Activated naive CD4-positive, alpha-beta T cell treated with anti-CD3 and anti-CD28 coated beads for 36 hours (primary cell): ENCODE measurements at regions of chrX and their contacts with region 1.

Region 1: GRCh38 chrX:118603981-118604380 is 108.4 kb downstream of the DOCK11 start:
- DNase-seq: peak; percentile 50
- H3K4me3 Mint-ChIP-seq: no peak overlapping the region
- H3K27ac Mint-ChIP-seq: peak overlapping the region; percentile 28
- H3K4me1 Mint-ChIP-seq: peaks cover 21% of the 10 kb centered on the region
- H3K27me3 Mint-ChIP-seq: no peaks in the 10 kb centered on the region

Region 2: GRCh38 chrX:118325453-118325852 is 278.5 kb before region 1 on chrX:
- CTCF ChIA-PET with region 1: no interaction called
- intact Hi-C with region 1: loop called (anchors 5 kb)
- DNase-seq: no peak
- H3K4me3 Mint-ChIP-seq: no peak overlapping the region
- H3K27ac Mint-ChIP-seq: no peak overlapping the region
- H3K4me1 Mint-ChIP-seq: no peaks in the 10 kb centered on the region
- H3K27me3 Mint-ChIP-seq: no peaks in the 10 kb centered on the region

Region 3: GRCh38 chrX:118459494-118459893 is 144.5 kb before region 1 on chrX:
- CTCF ChIA-PET with region 1: interaction called, 62 read pairs
- intact Hi-C with region 1: loop called (anchors 1 kb)
- DNase-seq: peak; percentile 37
- H3K4me3 Mint-ChIP-seq: no peak overlapping the region
- H3K27ac Mint-ChIP-seq: no peak overlapping the region
- H3K4me1 Mint-ChIP-seq: no peaks in the 10 kb centered on the region
- H3K27me3 Mint-ChIP-seq: no peaks in the 10 kb centered on the region

Region 4: GRCh38 chrX:118495061-118495921 is 108.7 kb before region 1 on chrX and contains the start of gene DOCK11:
- CTCF ChIA-PET with region 1: interaction called, 13 read pairs
- intact Hi-C with region 1: loop called (anchors 1 kb)
- DNase-seq: peak; percentile 86
- H3K4me3 Mint-ChIP-seq: peak within 1 kb of the TSS; percentile 97
- H3K27ac Mint-ChIP-seq: peak within 1 kb of the TSS; percentile 96
- H3K4me1 Mint-ChIP-seq: peaks cover 17% of the 10 kb centered on the region
- H3K27me3 Mint-ChIP-seq: no peaks in the 10 kb centered on the region
- total RNA-seq, gene DOCK11: 32.8 to 34.8 TPM

Region 5: GRCh38 chrX:118528071-118528737 is 75.8 kb before region 1 on chrX:
- CTCF ChIA-PET with region 1: no interaction called
- intact Hi-C with region 1: loop called (anchors 2 kb)
- DNase-seq: peak; percentile 73
- H3K4me3 Mint-ChIP-seq: peak overlapping the region; percentile 79
- H3K27ac Mint-ChIP-seq: peak overlapping the region; percentile 96
- H3K4me1 Mint-ChIP-seq: peaks cover 73% of the 10 kb centered on the region
- H3K27me3 Mint-ChIP-seq: no peaks in the 10 kb centered on the region